Transverse colon (tissue), 4 donors: ENCODE measurements at regions of chr1 and their contacts with region 1.

Region 1: DNA sequence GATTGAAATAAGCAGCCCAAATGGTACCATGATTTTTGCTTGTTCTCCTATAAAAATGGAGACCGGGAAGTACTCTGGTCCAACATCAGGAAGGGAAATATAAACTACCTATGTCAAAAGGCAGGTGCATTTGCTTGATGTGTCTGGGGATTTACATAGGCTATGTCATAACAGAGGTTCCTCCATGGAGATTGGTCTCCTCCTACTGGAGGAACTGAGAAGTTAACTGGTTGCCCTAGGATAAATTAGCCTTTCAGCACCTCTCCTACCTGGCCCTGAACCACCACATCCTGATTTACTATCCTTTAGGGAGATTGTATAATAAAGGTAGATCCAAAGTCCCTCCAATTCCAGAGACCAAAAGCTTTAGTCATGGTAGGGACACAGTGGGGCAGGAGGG is 1109.3 kb upstream of the B3GALT2 start:
- DNase-seq: no peak
- H3K4me3 ChIP-seq: no peak overlapping the region
- H3K27ac ChIP-seq: no peak overlapping the region
- H3K4me1 ChIP-seq: no peaks in the 10 kb centered on the region
- H3K27me3 ChIP-seq: no peaks in the 10 kb centered on the region
- CTCF ChIP-seq: peak; percentile 52 to 83 (median 69)
- EP300 ChIP-seq: no peak
- POLR2A ChIP-seq: no peak

Region 2: DNA sequence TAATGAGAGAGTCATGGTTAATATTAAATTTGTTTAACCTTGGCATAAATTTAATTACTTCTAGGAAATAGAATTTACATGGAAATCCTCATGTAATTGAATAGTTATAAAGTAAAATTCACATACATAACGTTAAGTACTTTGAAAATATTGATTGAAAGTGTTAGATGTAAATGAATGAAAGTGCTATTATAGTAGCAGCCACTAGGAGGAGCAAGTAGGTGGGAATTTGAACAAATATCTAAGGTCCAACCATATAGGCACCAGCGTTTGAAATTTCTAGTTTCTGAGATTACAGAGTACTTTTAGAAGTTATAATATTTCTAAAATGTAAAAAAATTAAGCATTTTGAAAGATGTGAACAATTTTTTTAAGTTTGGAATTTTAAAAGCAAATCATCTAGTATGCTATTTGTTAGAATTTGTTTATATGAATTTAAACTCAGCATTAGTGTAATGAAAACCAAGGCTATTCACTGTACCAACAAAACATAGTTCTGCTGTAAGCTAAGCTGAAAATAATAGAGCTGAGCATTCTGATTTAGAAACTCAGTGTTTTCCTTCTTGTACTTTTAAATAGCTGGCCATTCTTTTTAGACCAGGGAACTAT is 1112.6 kb before region 1 on chr1:
- in situ Hi-C with region 1: loop called in 3 of 4 experiments (anchors 5 to 25 kb)
- intact Hi-C with region 1: no loop called
- DNase-seq: no peak
- H3K4me3 ChIP-seq: peak overlapping the region in 1 of 4 donors; percentile 43
- H3K27ac ChIP-seq: peak overlapping the region in 1 of 4 donors; percentile 28
- H3K4me1 ChIP-seq: peaks cover 3 to 78% (median 30%) of the 10 kb centered on the region in 4 donors
- H3K27me3 ChIP-seq: no peaks in the 10 kb centered on the region
- CTCF ChIP-seq: peak; percentile 70 to 86 (median 79)
- EP300 ChIP-seq: no peak
- POLR2A ChIP-seq: no peak

Region 3: DNA sequence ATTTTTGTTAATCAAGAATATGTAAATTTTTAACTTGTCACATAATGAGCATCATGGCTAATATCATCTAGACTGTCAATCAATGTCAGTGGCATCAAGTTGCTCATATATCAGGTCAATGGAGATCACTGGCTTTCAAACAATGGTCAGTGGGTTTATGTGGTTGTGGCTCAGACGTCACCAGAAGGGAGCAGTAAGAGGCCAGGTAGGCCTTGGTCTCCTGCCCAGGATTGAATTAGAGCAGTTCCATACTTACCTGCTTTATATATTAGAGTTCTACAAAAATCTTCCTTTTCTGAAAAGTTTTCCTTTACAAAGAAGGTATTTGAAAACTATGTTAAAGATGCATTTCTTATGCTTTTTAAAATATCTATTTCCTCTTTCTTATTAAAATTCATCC is 903.0 kb before region 1 on chr1:
- in situ Hi-C with region 1: loop called in 1 of 4 experiments (anchors 25 kb)
- intact Hi-C with region 1: no loop called
- DNase-seq: no peak
- H3K4me3 ChIP-seq: no peak overlapping the region
- H3K27ac ChIP-seq: no peak overlapping the region
- H3K4me1 ChIP-seq: no peaks in the 10 kb centered on the region
- H3K27me3 ChIP-seq: no peaks in the 10 kb centered on the region
- CTCF ChIP-seq: no peak
- EP300 ChIP-seq: no peak
- POLR2A ChIP-seq: no peak

Region 4: DNA sequence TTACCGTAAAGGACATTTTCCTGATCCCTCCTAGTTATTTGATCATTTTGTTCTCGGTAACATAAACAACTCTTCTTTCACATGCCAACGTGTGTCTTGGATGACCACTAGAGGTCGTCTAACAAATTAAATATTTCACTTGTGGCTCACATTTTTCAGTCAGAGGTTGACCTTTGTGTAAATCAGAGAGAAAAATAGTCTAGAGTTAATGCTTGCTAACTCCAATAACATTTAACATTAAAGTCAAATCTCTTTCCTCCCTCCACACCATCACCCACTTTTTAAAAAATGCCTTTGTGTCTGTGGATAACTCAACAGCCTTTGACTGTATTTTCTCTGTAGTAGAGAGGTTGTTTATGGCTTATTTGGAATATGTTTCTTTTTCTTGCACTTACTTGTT is 888.8 kb before region 1 on chr1:
- in situ Hi-C with region 1: loop called in 1 of 4 experiments (anchors 25 kb)
- intact Hi-C with region 1: no loop called
- DNase-seq: no peak
- H3K4me3 ChIP-seq: no peak overlapping the region
- H3K27ac ChIP-seq: peak overlapping the region in 3 of 4 donors; percentile 33 to 37 (median 35)
- H3K4me1 ChIP-seq: peaks cover 5 to 16% (median 8%) of the 10 kb centered on the region in 4 donors
- H3K27me3 ChIP-seq: no peaks in the 10 kb centered on the region
- CTCF ChIP-seq: peak; percentile 60 to 77 (median 70)
- EP300 ChIP-seq: no peak
- POLR2A ChIP-seq: no peak